ENCODE measurements at regions of chr9 and their contacts with region 1.

Region 1: DNA sequence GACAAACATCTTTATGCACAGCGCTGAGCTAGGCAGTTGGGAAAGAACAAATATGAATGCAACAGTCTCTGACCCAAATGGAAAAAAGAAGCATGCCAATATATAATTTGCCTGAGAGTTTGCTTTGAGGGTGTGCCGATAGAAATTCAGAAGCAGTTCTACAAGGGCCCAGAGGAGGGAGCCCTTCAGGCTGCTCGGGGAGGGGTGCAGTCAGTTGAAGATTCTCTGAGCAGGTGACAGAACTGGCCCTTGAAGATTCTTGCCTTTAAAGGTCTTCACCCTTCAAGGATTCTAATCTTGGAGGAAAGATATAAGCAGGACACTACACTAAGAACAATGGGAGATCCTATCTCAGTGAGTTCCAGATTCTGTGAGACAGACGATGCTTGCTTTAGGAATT is 3.7 kb upstream of the PAPPA start:
- DNase-seq: peak; percentile 27
- H3K4me3 Mint-ChIP-seq: no peak overlapping the region
- H3K27ac Mint-ChIP-seq: no peak overlapping the region
- H3K4me1 Mint-ChIP-seq: no peaks in the 10 kb centered on the region
- H3K27me3 Mint-ChIP-seq: peaks cover 32% of the 10 kb centered on the region
- CTCF ChIP-seq: no peak

Region 2: GRCh38 chr9:115900699-115901098 is 249.1 kb before region 1 on chr9:
- CTCF ChIA-PET with region 1: no interaction called
- intact Hi-C with region 1: no loop called
- DNase-seq: no peak
- H3K4me3 Mint-ChIP-seq: no peak overlapping the region
- H3K27ac Mint-ChIP-seq: no peak overlapping the region
- H3K4me1 Mint-ChIP-seq: no peaks in the 10 kb centered on the region
- H3K27me3 Mint-ChIP-seq: no peaks in the 10 kb centered on the region
- CTCF ChIP-seq: no peak

Region 3: GRCh38 chr9:116075191-116075590 is 74.7 kb before region 1 on chr9:
- CTCF ChIA-PET with region 1: no interaction called
- intact Hi-C with region 1: no loop called
- DNase-seq: no peak
- H3K4me3 Mint-ChIP-seq: no peak overlapping the region
- H3K27ac Mint-ChIP-seq: no peak overlapping the region
- H3K4me1 Mint-ChIP-seq: no peaks in the 10 kb centered on the region
- H3K27me3 Mint-ChIP-seq: no peaks in the 10 kb centered on the region
- CTCF ChIP-seq: no peak

Region 4: DNA sequence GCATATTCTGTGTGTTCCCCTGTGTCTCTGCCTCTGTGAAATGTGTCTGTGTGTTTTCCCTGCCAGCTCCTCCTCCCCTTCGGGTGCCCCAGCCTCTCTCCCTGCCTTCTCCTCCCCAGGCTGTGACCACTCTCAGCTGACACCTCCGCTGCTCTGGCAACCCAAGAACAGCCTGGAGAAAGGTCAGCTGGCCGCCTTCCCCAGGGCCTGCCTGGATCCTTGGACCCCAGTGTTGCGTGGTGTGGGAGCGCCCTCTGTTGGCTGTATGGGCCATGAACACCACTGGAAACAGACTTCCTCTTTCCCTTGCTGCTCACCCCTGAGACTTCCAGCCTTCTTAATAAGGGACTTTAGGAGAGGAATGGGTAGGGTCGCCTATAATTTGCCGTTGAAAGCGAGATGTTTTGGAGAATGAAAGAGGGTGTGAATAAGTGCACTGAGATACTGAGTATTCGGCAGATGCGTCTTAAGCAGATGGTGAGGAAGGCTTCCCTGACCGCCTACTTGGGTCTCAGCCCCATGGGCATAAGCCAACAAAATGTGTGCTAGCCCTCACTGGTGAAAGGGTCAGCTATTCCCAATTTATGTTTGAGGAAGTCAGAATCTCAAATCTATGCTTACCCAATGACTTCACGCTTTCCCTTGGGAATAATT is 422.4 kb after region 1 on chr9:
- CTCF ChIA-PET with region 1: interaction called, 6 read pairs
- intact Hi-C with region 1: loop called (anchors 5 kb)
- DNase-seq: peak; percentile 73
- H3K4me3 Mint-ChIP-seq: no peak overlapping the region
- H3K27ac Mint-ChIP-seq: no peak overlapping the region
- H3K4me1 Mint-ChIP-seq: peaks cover 6% of the 10 kb centered on the region
- H3K27me3 Mint-ChIP-seq: no peaks in the 10 kb centered on the region
- CTCF ChIP-seq: peak; percentile 58

Region 5: GRCh38 chr9:116646661-116647512 is 497.0 kb after region 1 on chr9:
- CTCF ChIA-PET with region 1: interaction called, 3 read pairs
- intact Hi-C with region 1: loop called (anchors 5 kb)
- DNase-seq: peak; percentile 7
- H3K4me3 Mint-ChIP-seq: no peak overlapping the region
- H3K27ac Mint-ChIP-seq: no peak overlapping the region
- H3K4me1 Mint-ChIP-seq: no peaks in the 10 kb centered on the region
- H3K27me3 Mint-ChIP-seq: peaks cover 12% of the 10 kb centered on the region
- CTCF ChIP-seq: peak; percentile 15

Measured in Calu3 (cell line).